ENCODE measurements at regions of chr15 and their contacts with region 1.

Region 1: DNA sequence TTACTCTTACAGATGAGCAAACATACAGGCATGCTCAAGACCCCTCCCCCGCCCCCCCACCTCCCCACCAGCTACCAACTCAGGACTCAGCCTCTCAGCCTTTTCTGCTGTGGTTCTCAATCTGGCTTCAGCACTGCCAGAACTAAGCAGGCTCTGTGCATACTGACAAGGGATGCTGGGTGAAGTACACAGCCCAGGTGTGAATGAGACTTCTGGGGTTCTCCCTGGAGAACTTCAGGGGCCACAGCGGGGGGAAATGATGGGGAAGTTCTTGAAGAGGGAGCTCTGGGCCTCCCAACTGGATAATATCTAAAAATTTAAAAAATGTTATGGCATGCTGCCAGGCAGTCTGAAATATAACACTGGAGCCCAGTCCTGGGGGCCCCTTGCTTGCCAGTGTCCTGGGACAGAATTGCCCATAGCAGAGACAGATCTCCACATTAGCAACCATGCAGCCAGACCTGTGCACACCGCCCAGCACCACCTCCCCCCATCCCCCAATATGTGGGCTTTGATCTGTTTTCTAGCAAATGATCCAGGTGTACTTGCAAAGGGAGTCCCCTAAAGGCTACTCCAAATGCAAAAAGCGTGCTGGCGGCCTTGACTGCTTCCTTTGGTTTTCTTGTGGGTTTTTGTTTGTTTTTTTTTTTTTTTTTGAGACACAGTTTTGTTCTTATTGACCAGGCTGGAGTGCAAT is 41.4 kb downstream of the PGPEP1L start:
- DNase-seq: peak in 2 of 42 donors; percentile 5 to 31

Region 2: DNA sequence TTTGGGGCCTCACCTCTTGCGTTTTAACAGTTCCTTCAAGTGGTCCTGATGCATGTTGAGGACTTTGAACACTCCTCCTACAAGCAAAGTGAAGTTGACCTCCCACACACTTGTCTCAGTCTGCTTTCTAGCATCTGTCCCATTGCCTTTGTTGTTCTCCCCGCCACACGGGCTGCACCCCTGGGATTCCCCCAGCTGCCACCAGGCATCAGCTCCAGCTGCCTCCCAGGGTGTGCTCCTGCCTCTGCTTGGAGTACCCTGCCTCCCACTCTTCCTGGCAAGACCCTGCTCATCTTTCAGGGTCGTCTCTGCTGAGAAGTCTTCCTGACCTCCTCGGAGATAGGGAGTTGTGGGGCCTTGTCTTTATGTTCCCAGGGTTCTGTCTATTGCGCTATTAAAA is 265.7 kb before region 1 on chr15:
- intact Hi-C with region 1: no loop called
- DNase-seq: no peak

Region 3: GRCh38 chr15:99059010-99059981 is 93.1 kb after region 1 on chr15:
- intact Hi-C with region 1: loop called (anchors 10 kb)
- DNase-seq: peak in 40 of 42 donors; percentile 18 to 80 (median 62)

Measured in head of caudate nucleus (tissue), 42 donors.